Cardiac septum (tissue), 1 donor: ENCODE measurements at regions of chr5 and their contacts with region 1.

Region 1: GRCh38 chr5:89457411-89458331 is 574.7 kb upstream of the MEF2C start:
- DNase-seq: peak; percentile 76

Region 2: DNA sequence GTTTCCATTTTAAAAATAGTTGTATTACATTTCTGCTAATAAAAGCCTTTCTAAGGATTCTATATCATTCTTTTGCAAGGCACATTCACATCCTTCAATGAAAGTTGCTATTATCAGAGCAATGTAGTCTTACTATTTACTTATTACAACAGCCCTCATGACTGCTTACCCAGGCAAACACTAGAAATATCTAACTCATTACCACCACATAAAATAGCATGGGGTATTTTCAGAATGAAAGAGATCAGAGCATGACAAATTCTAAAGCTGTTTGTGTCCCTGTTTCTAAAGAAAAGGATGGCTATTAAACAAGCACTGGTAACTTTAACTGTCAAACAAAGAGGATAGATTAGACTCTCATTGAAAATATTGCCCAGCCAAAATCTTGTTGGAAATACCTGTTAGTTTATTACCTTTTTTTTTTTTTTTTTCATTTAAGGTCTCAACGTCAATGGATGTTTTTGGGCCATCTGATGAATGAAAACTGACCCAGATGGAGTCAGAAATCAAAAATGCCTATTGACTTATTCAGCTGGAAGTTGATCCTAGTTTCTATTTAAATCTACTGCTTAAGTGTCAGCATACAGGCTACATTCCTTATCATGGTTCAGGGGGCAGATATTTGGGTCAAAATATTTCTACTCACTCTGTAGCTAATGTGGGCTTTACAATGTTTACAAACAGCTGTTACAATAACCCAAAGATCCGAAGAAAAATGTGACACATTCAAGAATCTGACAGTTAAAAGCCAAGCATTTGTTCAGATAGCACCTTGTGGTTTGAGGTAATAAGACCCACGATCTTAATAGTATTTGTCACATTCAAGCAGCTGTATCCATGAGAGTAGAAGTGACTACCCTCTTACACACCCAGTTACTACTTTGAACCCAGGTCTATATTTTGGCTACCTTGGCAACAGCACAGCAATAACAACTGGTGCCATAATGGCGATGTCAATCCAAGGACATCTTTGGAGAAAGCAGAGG is 19.9 kb before region 1 on chr5:
- intact Hi-C with region 1: loop called (anchors 2 kb)
- DNase-seq: no peak